Tibial artery (tissue), 4 donors: ENCODE measurements at regions of chr14 and their contacts with region 1.

Region 1: DNA sequence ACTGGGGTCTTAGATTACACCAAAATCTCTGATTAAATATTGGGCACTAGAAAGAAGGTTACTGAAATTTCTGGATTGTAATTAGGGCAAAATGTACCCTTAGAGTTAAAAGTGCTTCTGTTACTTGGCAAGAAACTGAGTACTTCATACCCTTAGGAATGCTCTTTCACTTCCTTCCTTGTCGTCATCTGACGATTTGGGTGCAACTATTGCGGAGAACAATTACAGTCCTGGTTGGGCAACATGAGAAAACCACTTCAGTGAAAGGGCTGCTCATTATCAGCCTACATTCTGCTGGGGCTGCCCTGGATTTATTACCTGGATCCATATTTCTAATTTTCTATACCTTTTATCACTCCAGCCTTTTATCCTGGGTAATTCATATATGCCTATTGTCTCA is 348.5 kb upstream of the MDGA2 start:
- DNase-seq: no peak
- H3K4me3 ChIP-seq: no peak overlapping the region
- H3K27ac ChIP-seq: no peak overlapping the region
- H3K4me1 ChIP-seq: no peaks in the 10 kb centered on the region
- H3K27me3 ChIP-seq: no peaks in the 10 kb centered on the region
- CTCF ChIP-seq: no peak

Region 2: DNA sequence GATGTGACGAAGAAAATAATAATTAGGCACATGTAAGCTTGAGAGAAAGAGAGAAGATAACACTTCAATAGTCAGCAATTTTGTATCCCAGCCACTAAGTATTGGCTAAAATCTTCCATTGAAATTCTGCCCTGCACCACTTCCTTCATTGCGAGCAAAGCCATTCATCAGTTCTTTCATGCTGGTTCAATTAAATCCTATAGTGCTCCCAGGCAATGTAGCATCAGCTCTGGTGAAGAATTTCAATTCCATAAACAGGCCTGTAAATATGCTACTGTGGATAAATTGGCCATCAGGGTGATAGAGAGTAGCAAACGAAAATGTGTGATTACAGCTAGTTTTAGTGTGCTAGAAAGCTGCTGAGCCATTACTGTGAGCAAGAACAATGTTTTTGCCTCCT is 1397.0 kb before region 1 on chr14:
- intact Hi-C with region 1: loop called (anchors 5 kb)
- DNase-seq: no peak
- H3K4me3 ChIP-seq: no peak overlapping the region
- H3K27ac ChIP-seq: no peak overlapping the region
- H3K4me1 ChIP-seq: no peaks in the 10 kb centered on the region
- H3K27me3 ChIP-seq: no peaks in the 10 kb centered on the region
- CTCF ChIP-seq: no peak

Region 3: GRCh38 chr14:48243900-48244299 is 220.0 kb after region 1 on chr14:
- intact Hi-C with region 1: no loop called
- DNase-seq: no peak
- H3K4me3 ChIP-seq: no peak overlapping the region
- H3K27ac ChIP-seq: no peak overlapping the region
- H3K4me1 ChIP-seq: no peaks in the 10 kb centered on the region
- H3K27me3 ChIP-seq: no peaks in the 10 kb centered on the region
- CTCF ChIP-seq: no peak